Cardiac septum (tissue), 1 donor: ENCODE measurements at regions of chr12 and their contacts with region 1.

Region 1: DNA sequence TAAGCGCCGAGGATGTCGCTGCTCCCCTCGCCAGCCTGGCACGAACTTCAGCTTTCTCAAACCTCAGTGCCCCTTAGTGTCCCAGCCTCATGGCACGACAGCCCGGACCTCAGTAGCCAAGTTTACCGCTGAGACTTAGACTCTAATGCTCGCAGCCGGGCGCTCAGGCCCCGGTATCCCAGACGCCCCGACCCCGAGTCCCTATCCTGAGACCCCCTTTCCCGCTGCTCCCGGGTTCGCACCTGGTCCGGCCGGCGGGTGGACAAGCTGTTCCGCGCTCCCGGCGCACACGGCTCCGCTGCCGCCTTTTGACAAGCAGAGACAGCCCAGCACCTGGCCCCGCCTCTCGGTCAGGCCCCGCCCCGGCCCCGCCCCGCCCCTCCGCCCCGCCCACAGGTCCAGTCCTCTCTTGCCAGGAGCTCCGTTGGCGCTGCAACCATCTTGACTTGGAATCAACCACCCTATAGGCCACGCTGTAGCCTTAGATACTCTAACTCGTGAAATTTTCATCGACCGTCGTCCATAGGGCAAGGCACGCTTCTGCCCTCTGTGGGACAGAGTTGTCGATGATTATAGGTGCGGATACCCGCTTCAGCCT is at the start of gene VDR:
- DNase-seq: peak; percentile 91
- total RNA-seq, gene VDR: 1.3 TPM

Region 2: GRCh38 chr12:47591361-47591791 is 313.4 kb before region 1 on chr12:
- intact Hi-C with region 1: no loop called
- DNase-seq: no peak

Region 3: GRCh38 chr12:47870175-47870781 is 34.5 kb before region 1 on chr12:
- intact Hi-C with region 1: no loop called
- DNase-seq: no peak

Region 4: DNA sequence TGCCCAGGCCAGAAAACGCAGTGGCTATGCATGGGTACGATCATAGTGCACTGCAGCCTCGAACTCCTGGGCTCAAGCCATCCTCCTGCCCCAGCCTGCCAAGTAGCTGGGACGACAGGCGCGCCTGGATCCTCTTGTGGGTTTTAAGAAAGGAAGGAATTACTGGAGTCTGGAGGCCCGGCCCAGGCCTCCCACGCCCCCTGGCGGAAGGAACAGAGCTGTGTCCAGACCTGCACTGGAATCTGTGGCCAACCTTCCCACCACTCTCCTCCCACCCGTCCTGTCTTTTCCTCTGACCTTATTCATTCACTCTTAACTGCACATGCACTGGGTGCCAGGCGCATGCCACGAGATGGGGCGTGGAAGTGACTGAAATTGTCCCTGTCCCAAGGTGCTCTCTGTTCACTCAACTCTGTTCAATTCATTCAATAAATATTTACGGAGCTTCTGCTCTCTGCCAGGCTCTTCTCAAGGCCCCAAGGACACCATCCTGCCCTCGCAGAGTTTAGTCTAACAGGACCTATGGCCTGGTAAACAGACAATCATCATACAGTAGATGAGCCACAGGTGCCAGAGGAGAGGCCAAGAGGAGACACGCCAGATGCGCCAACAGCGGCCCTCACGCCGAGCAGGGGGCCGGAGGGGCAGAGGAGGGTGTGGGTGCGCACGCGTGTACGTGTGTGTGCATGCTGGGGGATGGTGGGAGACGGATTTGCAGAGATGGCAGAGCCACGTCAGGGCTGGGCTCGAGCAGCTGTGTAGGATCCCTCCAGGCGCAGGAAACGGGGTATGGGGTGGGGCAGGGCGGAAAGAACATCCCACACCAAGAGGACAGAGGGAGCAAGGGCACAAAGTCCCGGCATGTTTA is 44.9 kb after region 1 on chr12:
- intact Hi-C with region 1: loop called (anchors 5 kb)
- DNase-seq: peak; percentile 85